ENCODE measurements at regions of chr12 and their contacts with region 1.

Region 1: DNA sequence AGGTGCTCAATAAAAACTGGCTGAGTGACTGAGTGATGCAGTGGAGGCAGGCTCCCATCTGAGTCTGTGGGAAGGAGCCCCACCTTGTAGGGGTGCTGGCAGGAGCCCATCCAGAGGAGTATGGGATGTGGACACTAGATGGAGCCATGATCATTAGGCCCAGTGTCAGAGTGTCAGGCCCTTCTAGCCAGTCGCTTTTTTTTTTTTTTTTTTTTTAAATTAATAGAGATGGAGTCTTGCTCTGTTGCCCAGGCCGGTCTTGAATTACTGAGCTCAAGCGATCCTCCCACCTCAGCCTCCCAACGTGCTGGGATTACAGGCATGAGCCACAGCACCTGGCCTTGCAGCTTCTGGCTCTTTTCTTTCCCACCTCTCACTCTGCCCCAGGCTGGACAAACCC is 11.5 kb downstream of the RITA1 start:
- DNase-seq: peak; percentile 75
- ATAC-seq: peak; percentile 91

Region 2: DNA sequence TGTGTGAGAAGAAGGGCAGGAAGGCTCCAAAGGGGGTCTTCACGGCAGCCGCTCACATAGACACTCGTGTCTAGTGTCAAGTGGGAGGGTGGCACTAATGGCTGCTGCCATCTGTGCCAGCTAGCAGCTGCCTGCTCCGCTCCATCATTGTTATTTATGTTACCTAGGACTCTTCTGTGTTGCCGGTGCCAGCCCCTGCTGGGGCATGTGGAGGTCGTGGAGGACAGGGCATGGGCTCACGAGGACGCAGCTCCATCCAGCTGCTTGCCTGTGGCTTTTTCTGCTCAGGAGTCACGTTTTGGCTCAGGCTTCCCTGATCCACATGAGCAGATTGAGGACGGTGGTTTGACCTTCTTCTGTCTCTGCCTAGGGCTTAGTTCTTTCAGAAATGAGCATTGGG is 55.5 kb after region 1 on chr12:
- intact Hi-C with region 1: no loop called
- DNase-seq: no peak
- ATAC-seq: peak; percentile 85

Region 3: GRCh38 chr12:113299619-113300237 is 102.7 kb after region 1 on chr12:
- intact Hi-C with region 1: loop called (anchors 5 kb)
- DNase-seq: peak; percentile 84
- ATAC-seq: peak; percentile 68